Activated CD8-positive, alpha-beta T cell treated with anti-CD3 and anti-CD28 coated beads, Interleukin-2, amount 10 ng/mL, durations not matched to agents 7 days and 5 days (primary cell): ENCODE measurements at regions of chr5 and their contacts with region 1.

Region 1: DNA sequence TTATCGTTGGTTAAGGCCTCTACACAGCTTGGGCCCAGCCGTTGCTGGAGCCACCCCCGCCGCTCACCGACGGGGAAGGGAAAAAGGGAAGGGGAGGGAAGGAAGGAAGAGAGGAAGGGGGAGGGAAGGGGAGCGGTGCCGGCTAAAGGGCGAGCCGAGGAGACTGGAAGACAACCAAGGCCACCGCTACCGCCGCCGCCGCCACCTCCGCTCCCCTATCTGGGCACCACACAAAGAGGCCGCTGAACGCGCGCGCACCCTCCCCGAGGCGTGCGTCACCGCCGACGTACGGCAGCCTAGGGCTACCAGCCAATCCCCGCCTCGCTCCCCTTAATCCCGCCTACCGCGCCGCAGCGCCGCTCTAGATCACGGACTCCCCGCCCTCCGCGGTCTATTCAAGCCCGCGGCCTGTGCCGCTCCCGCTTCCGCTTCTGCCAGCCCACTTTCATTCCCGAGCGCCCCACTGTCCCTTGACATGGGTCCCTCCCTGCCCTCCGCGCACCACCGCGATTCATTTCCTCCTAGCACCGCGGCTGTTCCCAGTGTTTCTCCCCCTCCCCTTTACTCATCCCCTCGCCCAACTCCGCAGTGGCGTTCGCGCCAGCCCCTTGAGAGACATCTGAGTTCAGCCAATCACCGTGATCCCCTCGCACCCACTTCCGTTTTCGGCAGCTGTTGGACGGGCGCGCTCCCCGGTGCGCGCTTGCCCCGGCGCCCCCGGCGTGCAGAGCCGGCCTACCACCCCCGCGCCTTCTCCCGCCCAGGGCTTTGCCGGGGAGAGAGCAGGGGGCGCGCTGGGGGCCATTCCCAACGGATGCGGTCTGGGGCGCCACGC is at the start of gene HNRNPA0:
- DNase-seq: peak; percentile 97
- ATAC-seq: peak; percentile 88
- H3K4me3 Mint-ChIP-seq: peak within 1 kb of the TSS; percentile 99
- H3K27ac Mint-ChIP-seq: peak within 1 kb of the TSS; percentile 100
- H3K4me1 Mint-ChIP-seq: peaks cover 26% of the 10 kb centered on the region
- H3K27me3 Mint-ChIP-seq: peaks cover 3% of the 10 kb centered on the region
- total RNA-seq, gene HNRNPA0: 31.3 to 34.0 TPM

Region 2: GRCh38 chr5:137718611-137719010 is 35.7 kb before region 1 on chr5:
- CTCF ChIA-PET with region 1: interaction called, 10 read pairs
- POLR2A ChIA-PET with region 1: no interaction called
- DNase-seq: no peak
- ATAC-seq: no peak
- H3K4me3 Mint-ChIP-seq: no peak overlapping the region
- H3K27ac Mint-ChIP-seq: no peak overlapping the region
- H3K4me1 Mint-ChIP-seq: no peaks in the 10 kb centered on the region
- H3K27me3 Mint-ChIP-seq: no peaks in the 10 kb centered on the region

Region 3: GRCh38 chr5:137735555-137736284 is 18.6 kb before region 1 on chr5 and contains the start of gene KLHL3:
- CTCF ChIA-PET with region 1: interaction called, 34 read pairs
- POLR2A ChIA-PET with region 1: interaction called, 28 read pairs
- DNase-seq: peak; percentile 54
- ATAC-seq: peak; percentile 48
- H3K4me3 Mint-ChIP-seq: no peak within 1 kb of the TSS
- H3K27ac Mint-ChIP-seq: no peak within 1 kb of the TSS
- H3K4me1 Mint-ChIP-seq: peaks cover 26% of the 10 kb centered on the region
- H3K27me3 Mint-ChIP-seq: no peaks in the 10 kb centered on the region
- total RNA-seq, gene KLHL3: 13.7 to 15.2 TPM

Region 4: DNA sequence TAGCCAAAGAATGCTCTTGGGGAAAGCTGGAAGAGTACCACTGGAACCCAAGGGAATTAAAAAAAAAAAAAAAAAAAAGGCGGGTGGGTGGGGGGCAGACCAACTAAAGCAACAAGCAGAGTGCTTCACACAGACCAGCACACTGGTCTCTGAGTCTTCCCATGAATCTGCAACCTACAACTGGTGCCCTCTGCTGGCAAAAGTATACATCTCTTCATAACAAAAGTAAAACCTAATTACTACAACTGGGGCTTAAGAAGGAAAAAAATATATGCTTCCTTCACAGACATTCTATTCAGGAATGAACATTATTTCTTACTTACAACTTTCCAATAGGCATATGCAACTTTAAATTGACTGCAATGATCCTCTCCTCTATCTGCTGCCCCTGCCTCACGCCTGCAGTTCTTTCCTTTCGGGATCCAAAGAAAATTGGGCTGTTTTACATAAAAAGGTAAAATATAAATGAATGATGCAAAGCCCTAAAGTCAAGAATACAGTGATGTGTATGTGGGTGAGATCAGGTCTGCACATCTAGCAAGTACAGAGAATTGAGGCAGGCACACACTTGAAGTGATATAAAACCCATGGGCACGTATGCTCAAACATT is 11.2 kb before region 1 on chr5:
- CTCF ChIA-PET with region 1: interaction called, 34 read pairs
- POLR2A ChIA-PET with region 1: interaction called, 28 read pairs
- DNase-seq: peak; percentile 82
- ATAC-seq: peak; percentile 88
- H3K4me3 Mint-ChIP-seq: no peak overlapping the region
- H3K27ac Mint-ChIP-seq: no peak overlapping the region
- H3K4me1 Mint-ChIP-seq: peaks cover 19% of the 10 kb centered on the region
- H3K27me3 Mint-ChIP-seq: no peaks in the 10 kb centered on the region

Region 5: DNA sequence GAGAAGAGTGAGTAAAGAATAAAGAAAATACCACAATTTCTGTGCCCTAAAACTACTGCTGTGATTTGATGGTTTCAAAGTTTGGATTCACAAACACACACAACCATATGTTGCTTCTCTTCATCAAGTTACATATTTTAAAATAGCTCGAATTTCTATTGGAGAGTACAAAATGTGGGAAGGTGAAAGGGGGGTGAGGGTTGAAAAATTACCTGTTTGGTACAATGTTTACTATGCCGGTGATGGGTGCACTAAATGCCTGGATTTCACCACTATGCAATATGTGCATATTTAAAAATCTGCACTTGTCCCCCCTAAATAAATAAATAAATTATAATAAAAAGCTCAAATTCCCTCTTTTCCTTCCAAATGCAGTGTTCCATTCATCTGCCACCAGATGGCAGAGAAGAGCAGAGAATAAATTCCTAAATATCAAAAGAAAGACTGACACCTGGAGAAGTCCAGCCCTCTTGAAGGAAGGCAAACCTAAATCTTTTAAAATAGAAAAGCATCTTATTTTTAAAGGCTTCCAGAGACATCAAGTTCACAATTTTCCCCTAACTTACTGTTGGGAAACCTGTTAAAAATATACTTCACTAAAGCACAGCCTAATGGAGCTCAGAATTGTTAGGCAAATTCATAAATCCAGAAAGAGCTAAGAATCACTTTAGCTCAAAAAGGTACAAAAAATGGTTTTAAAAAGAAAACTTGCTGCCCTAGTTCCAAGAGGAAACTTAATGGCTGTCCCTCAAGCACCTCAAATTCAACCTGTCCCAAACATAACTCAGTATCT is 24.6 kb after region 1 on chr5:
- CTCF ChIA-PET with region 1: interaction called, 10 read pairs
- POLR2A ChIA-PET with region 1: no interaction called
- DNase-seq: no peak
- ATAC-seq: no peak
- H3K4me3 Mint-ChIP-seq: no peak overlapping the region
- H3K27ac Mint-ChIP-seq: no peak overlapping the region
- H3K4me1 Mint-ChIP-seq: no peaks in the 10 kb centered on the region
- H3K27me3 Mint-ChIP-seq: no peaks in the 10 kb centered on the region

Region 6: GRCh38 chr5:137888857-137889759 is 134.8 kb after region 1 on chr5 and contains the start of gene PKD2L2:
- CTCF ChIA-PET with region 1: interaction called, 7 read pairs
- POLR2A ChIA-PET with region 1: interaction called, 12 read pairs
- DNase-seq: peak; percentile 86
- ATAC-seq: peak; percentile 100
- H3K4me3 Mint-ChIP-seq: peak within 1 kb of the TSS; percentile 73
- H3K27ac Mint-ChIP-seq: peak within 1 kb of the TSS; percentile 85
- H3K4me1 Mint-ChIP-seq: peaks cover 21% of the 10 kb centered on the region
- H3K27me3 Mint-ChIP-seq: peaks cover 5% of the 10 kb centered on the region
- total RNA-seq, gene PKD2L2: not detected